CD8-positive, alpha-beta T cell (primary cell): ENCODE measurements at regions of chr19 and their contacts with region 1.

Region 1: DNA sequence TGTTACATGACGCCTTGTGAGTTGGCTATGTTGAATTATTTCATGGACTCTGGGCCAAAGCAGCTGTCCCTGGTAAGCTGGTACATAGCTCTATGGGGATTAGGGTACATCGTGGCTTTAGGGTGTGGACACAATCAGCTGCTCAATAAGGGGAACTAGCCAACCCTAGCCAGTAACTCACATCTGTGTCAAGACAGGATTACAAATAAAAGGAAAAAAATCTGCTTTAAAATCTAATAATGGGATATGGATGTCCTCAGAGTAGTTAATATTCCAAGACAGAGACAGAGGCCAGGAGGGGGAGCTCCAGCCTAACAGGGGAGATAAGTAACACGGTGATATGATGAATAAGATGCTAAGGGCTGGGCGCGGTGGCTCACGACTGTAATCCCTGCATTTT is 21.1 kb upstream of the ZNF766 start:
- DNase-seq: peak; percentile 39 to 74 (median 67)
- ATAC-seq: peak; percentile 70
- H3K4me3 ChIP-seq: no peak overlapping the region
- H3K4me3 Mint-ChIP-seq: no peak overlapping the region
- H3K27ac ChIP-seq: no peak overlapping the region
- H3K27ac Mint-ChIP-seq: no peak overlapping the region
- H3K4me1 ChIP-seq: no peaks in the 10 kb centered on the region
- H3K4me1 Mint-ChIP-seq: no peaks in the 10 kb centered on the region
- H3K27me3 ChIP-seq: no peaks in the 10 kb centered on the region
- H3K27me3 Mint-ChIP-seq: no peaks in the 10 kb centered on the region
- CTCF ChIP-seq: peak; percentile 45

Region 2: DNA sequence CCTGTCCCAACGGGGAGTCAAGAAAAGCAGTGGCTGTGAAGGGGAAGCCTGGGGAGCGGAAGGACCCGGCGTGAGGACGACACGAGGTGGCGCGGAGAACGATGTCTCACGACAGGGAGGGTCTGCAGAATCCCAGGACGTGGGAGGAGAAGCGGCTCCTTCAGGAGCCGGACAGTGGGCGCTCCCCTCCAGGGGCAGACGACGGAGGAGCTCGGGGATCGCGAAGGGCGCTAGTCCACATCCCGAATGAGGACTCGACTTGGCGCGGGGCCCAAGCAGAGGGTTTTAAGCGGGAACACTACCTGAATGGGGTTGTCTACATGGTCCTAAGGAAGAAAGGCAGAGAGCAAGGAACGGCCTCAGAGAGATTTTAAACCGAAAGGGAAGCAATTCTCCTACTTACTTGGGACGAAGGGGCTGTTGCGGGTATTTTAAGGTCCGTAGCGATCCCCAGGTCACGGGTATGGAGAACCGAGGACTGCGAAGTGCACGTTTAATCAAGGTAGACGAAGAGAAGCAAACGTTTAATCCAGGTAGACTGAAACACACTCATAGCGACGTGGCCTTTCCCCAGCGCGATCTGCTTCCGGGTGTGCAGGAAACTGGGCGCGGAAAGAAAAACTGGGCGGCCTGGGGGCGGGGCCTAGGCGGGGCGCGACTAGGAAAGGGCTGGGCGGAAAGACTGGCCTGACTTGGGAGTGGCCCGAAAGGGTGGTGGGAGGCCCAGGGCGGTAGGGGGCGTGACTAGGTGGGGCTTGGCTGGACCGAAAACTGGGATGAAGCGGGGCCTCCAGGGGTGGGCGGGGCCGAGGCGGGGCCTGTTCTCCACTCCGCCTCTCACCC is 152.8 kb before region 1 on chr19 and contains the start of gene ZNF841:
- CTCF ChIA-PET with region 1: no interaction called
- POLR2A ChIA-PET with region 1: no interaction called
- intact Hi-C with region 1: no loop called
- DNase-seq: peak; percentile 70 to 89 (median 83)
- ATAC-seq: peak; percentile 97
- H3K4me3 ChIP-seq: peak within 1 kb of the TSS; percentile 96 to 99
- H3K4me3 Mint-ChIP-seq: peak within 1 kb of the TSS; percentile 97
- H3K27ac ChIP-seq: peak within 1 kb of the TSS; percentile 86 to 87
- H3K27ac Mint-ChIP-seq: peak within 1 kb of the TSS; percentile 93
- H3K4me1 ChIP-seq: peaks cover 16% of the 10 kb centered on the region
- H3K4me1 Mint-ChIP-seq: peaks cover 41% of the 10 kb centered on the region
- H3K27me3 ChIP-seq: no peaks in the 10 kb centered on the region
- H3K27me3 Mint-ChIP-seq: no peaks in the 10 kb centered on the region
- CTCF ChIP-seq: no peak
- total RNA-seq, gene ZNF841: 18.9 to 19.9 TPM

Region 3: GRCh38 chr19:52140032-52140710 is 108.1 kb before region 1 on chr19:
- CTCF ChIA-PET with region 1: no interaction called
- POLR2A ChIA-PET with region 1: no interaction called
- intact Hi-C with region 1: no loop called
- DNase-seq: peak in 5 of 9 experiments; percentile 97 to 99 (median 97)
- ATAC-seq: peak; percentile 100
- H3K4me3 ChIP-seq: peak overlapping the region; percentile 84 to 97
- H3K4me3 Mint-ChIP-seq: peak overlapping the region; percentile 98
- H3K27ac ChIP-seq: peak overlapping the region; percentile 74 to 79
- H3K27ac Mint-ChIP-seq: peak overlapping the region; percentile 97
- H3K4me1 ChIP-seq: peaks cover 18% of the 10 kb centered on the region
- H3K4me1 Mint-ChIP-seq: peaks cover 40% of the 10 kb centered on the region
- H3K27me3 ChIP-seq: no peaks in the 10 kb centered on the region
- H3K27me3 Mint-ChIP-seq: no peaks in the 10 kb centered on the region
- CTCF ChIP-seq: no peak

Region 4: DNA sequence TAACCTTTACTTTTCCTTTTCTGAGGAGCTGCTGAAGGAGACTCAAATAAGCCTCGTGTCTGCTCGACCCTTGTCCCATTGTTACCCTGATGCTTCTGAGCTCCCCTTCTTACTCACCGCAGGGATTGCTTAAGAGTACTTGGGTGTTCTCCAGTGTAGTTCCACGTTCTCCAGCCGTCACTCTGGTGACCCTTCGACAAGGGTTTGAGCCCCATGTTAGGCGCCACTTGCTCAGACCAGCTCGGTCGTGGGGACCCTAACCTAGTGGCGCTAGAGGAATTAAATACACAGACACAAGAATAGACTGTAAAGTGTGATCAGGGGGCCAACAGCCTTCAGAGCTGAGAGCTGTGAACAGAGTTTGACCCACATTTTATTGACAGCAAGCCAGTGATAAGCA is 59.0 kb after region 1 on chr19:
- CTCF ChIA-PET with region 1: no interaction called
- POLR2A ChIA-PET with region 1: no interaction called
- intact Hi-C with region 1: no loop called
- DNase-seq: peak in 3 of 9 experiments; percentile 5 to 30 (median 25)
- ATAC-seq: no peak
- H3K4me3 ChIP-seq: no peak overlapping the region
- H3K4me3 Mint-ChIP-seq: no peak overlapping the region
- H3K27ac ChIP-seq: no peak overlapping the region
- H3K27ac Mint-ChIP-seq: no peak overlapping the region
- H3K4me1 ChIP-seq: no peaks in the 10 kb centered on the region
- H3K4me1 Mint-ChIP-seq: no peaks in the 10 kb centered on the region
- H3K27me3 ChIP-seq: no peaks in the 10 kb centered on the region
- H3K27me3 Mint-ChIP-seq: no peaks in the 10 kb centered on the region
- CTCF ChIP-seq: no peak

Region 5: DNA sequence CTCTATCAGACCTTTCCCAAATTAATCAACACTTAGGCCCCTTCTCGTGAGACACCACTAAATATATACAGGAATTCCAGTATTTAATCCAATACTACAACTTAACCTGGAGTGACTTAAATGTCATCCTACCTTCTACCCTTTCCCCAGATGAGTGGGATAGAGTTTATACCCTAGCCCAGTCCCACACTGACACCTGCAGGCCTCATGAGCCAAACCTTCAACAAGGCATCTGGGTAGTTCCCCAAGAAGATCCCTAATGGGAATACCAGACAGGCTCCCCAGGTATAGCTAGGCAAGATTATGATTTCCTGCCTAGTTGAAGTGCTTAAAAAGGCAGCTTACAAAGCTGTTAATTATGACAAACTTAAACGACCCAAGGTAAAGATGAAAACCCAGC is 374.0 kb after region 1 on chr19:
- CTCF ChIA-PET with region 1: no interaction called
- POLR2A ChIA-PET with region 1: no interaction called
- intact Hi-C with region 1: loop called in 1 of 2 experiments (anchors 1 kb)
- DNase-seq: peak in 2 of 9 experiments; percentile 11 to 20
- ATAC-seq: no peak
- H3K4me3 ChIP-seq: no peak overlapping the region
- H3K4me3 Mint-ChIP-seq: peak overlapping the region; percentile 29
- H3K27ac ChIP-seq: no peak overlapping the region
- H3K27ac Mint-ChIP-seq: peak overlapping the region; percentile 29
- H3K4me1 ChIP-seq: no peaks in the 10 kb centered on the region
- H3K4me1 Mint-ChIP-seq: peaks cover 25% of the 10 kb centered on the region
- H3K27me3 ChIP-seq: no peaks in the 10 kb centered on the region
- H3K27me3 Mint-ChIP-seq: no peaks in the 10 kb centered on the region
- CTCF ChIP-seq: no peak

Region 6: DNA sequence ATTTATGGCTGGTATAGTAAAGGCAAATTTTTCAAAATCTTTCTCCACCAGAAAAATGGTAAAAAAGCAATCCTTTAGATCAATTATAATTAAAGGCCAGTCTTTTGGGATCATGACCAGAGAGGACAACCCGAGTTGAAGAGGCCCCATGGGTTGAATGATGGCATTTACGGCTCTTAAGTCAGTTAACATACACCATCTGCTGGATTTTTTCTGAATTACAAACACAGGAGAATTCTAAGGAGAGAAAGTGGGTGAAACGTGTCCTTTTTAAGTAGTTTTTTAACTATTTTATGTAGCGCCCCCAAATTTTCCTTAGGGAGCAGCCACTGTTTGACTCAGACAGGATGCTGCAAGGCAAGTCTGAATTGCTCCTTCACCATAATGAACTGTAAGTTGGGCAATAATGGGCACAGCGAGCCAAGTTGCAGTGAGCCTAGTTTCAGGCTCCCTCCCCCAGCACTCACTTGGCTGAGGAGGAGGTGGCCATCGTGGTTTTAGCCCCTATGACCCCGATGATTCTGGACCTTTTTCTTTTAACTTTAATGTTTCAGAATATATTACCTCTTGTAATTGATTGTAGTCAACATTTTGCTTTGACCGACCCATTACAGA is 500.2 kb after region 1 on chr19:
- CTCF ChIA-PET with region 1: interaction called, 11 read pairs
- POLR2A ChIA-PET with region 1: no interaction called
- intact Hi-C with region 1: loop called in 1 of 2 experiments (anchors 1 kb)
- DNase-seq: peak in 3 of 9 experiments; percentile 33 to 76 (median 65)
- ATAC-seq: peak; percentile 46
- H3K4me3 ChIP-seq: no peak overlapping the region
- H3K4me3 Mint-ChIP-seq: no peak overlapping the region
- H3K27ac ChIP-seq: no peak overlapping the region
- H3K27ac Mint-ChIP-seq: no peak overlapping the region
- H3K4me1 ChIP-seq: no peaks in the 10 kb centered on the region
- H3K4me1 Mint-ChIP-seq: peaks cover 11% of the 10 kb centered on the region
- H3K27me3 ChIP-seq: no peaks in the 10 kb centered on the region
- H3K27me3 Mint-ChIP-seq: no peaks in the 10 kb centered on the region
- CTCF ChIP-seq: peak; percentile 68

Region 7: DNA sequence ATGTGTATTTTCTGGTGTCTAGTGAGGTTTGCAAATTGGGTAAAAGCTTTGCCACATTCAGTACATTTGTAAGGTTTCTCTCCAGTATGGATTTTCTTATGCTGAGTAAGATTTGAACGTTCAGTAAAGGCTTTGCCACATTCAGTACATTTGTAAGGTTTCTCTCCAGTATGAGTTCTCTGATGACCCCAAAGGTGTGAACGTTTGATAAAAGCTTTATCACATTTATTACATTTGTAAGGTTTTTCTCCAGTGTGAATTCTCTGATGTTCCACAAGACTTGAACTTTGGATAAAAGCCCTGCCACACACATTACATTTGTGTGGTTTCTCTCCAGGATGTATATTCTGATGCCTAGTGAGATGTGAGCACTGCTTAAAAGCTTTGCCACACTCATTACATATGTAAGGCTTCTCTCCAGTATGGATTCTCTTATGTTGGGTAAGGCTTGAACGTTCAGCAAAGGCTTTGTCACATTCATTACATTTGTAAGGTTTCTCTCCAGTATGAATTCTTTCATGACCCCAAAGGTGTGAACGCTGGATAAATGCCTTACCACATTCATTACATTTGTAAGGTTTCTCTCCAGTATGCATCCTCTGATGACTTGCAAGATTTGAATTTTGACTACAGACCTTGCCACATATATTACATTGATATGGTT is 989.0 kb after region 1 on chr19:
- CTCF ChIA-PET with region 1: no interaction called
- POLR2A ChIA-PET with region 1: no interaction called
- intact Hi-C with region 1: no loop called
- DNase-seq: no peak
- ATAC-seq: no peak
- H3K4me3 ChIP-seq: no peak overlapping the region
- H3K4me3 Mint-ChIP-seq: no peak overlapping the region
- H3K27ac ChIP-seq: no peak overlapping the region
- H3K27ac Mint-ChIP-seq: no peak overlapping the region
- H3K4me1 ChIP-seq: no peaks in the 10 kb centered on the region
- H3K4me1 Mint-ChIP-seq: no peaks in the 10 kb centered on the region
- H3K27me3 ChIP-seq: no peaks in the 10 kb centered on the region
- H3K27me3 Mint-ChIP-seq: no peaks in the 10 kb centered on the region
- CTCF ChIP-seq: no peak